Activated B cell treated with CpG ODN at 0.5 μM for 24 hours (primary cell): ENCODE measurements at regions of chr9 and their contacts with region 1.

Region 1: GRCh38 chr9:99184475-99185347 is 37.0 kb downstream of the ALG2 start:
- DNase-seq: peak; percentile 76
- ATAC-seq: peak; percentile 80
- H3K4me3 Mint-ChIP-seq: peak overlapping the region; percentile 57
- H3K27ac Mint-ChIP-seq: peak overlapping the region; percentile 95
- H3K4me1 Mint-ChIP-seq: peaks cover 98% of the 10 kb centered on the region
- H3K27me3 Mint-ChIP-seq: no peaks in the 10 kb centered on the region
- CTCF ChIP-seq: peak; percentile 81

Region 2: DNA sequence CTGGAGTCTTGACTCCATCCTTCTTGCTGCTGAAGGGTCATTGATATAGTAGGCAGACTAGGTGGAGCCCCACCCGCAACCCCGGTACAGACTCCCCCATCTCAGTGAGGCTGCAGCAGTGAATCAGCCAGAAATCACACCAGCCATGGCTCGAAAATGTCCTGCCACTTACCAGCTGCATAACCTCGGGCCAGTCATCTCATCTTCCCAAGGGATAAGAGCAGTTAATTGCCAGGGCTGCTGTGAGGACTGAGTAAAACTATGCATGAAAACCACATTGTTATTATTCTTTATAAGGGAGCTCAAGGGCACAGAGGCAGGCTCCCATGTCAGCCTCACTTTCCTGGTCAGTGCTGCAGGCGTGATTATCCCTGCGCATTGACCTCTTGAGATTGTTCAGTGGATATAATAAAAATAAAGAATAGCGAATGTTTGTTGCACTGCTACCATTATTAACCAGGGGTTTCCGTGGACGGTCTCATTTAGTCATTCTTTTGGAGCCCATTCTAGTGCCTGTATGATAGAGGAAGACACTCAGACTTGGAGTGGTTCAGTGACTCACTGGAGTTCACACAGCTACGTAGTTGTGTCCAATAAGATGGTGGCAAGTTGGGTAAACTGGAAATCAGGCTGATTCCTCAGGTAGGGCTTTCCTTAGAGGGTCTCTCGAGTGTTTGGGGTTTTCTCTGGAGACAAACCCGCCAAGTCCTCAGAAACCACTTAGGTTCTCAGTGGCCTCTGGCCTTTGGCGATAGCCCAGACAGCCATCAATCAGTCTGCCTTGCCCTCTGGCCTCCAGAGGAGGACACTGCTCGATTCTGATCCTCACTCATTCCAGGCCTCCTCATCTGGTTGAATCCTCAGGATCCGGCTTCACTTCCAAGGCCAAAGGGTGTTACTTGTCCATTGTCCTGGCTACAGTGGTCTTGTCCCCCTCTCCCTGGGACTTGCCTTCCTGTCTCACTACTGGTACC is 201.1 kb before region 1 on chr9:
- CTCF ChIA-PET with region 1: no interaction called
- POLR2A ChIA-PET with region 1: no interaction called
- intact Hi-C with region 1: no loop called
- DNase-seq: no peak
- ATAC-seq: no peak
- H3K4me3 Mint-ChIP-seq: no peak overlapping the region
- H3K27ac Mint-ChIP-seq: no peak overlapping the region
- H3K4me1 Mint-ChIP-seq: no peaks in the 10 kb centered on the region
- H3K27me3 Mint-ChIP-seq: no peaks in the 10 kb centered on the region
- CTCF ChIP-seq: no peak

Region 3: GRCh38 chr9:99104459-99105151 is 80.1 kb before region 1 on chr9 and contains the start of gene TGFBR1:
- CTCF ChIA-PET with region 1: no interaction called
- POLR2A ChIA-PET with region 1: interaction called, 11 read pairs
- intact Hi-C with region 1: loop called (anchors 2 kb)
- DNase-seq: peak; percentile 98
- ATAC-seq: peak; percentile 85
- H3K4me3 Mint-ChIP-seq: peak within 1 kb of the TSS; percentile 89
- H3K27ac Mint-ChIP-seq: peak within 1 kb of the TSS; percentile 83
- H3K4me1 Mint-ChIP-seq: peaks cover 50% of the 10 kb centered on the region
- H3K27me3 Mint-ChIP-seq: no peaks in the 10 kb centered on the region
- CTCF ChIP-seq: no peak
- total RNA-seq, gene TGFBR1: 53.5 and 65.3 TPM in 2 replicates

Region 4: GRCh38 chr9:99221621-99222415 is 37.1 kb after region 1 on chr9 and contains the starts of genes ALG2 and SEC61B:
- CTCF ChIA-PET with region 1: interaction called, 40 read pairs
- POLR2A ChIA-PET with region 1: interaction called, 191 read pairs
- intact Hi-C with region 1: loop called (anchors 1 kb)
- DNase-seq: peak; percentile 84
- ATAC-seq: peak; percentile 89
- H3K4me3 Mint-ChIP-seq: peak within 1 kb of the TSS; percentile 97
- H3K27ac Mint-ChIP-seq: peak within 1 kb of the TSS; percentile 100
- H3K4me1 Mint-ChIP-seq: peaks cover 72% of the 10 kb centered on the region
- H3K27me3 Mint-ChIP-seq: no peaks in the 10 kb centered on the region
- CTCF ChIP-seq: no peak
- total RNA-seq, gene ALG2: 51.9 and 54.4 TPM in 2 replicates
- total RNA-seq, gene SEC61B: 200 and 243 TPM in 2 replicates

Region 5: DNA sequence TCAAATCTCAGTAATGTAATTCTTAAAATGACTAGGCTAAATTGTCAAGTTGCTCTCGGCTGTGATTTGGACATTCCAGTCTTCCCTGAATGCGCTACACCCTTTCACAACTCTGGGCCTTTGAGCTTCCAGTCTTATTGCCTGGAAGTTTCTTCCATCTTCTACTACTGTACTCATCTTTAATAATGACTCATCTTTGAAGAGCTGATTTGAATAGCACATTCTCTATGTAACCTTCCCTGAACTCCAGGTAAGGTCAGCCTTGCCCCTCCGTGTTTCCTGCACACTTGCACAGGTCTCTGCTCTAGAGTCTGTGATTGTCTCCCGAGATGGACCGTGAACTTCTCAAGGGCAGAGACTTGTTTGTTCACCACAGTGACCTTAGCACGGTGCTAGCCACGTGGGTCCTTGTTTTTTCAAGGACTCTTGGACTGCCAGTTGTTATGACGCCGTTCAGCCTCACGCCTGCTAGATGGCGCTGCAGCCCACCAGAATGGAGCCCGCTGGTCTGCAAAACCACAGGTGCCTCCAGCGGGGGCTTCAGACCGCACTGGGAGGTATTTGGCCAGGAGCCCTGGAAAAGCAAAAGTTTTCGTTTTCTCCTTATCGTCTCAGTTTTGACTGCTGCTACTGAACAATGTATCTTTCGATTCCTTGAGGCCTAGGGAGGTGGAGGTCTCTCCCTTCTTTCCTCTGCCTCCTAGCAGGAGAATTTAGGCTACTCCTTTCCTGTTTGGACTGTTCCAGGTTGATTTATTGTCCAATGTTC is 81.7 kb after region 1 on chr9:
- CTCF ChIA-PET with region 1: interaction called, 12 read pairs
- POLR2A ChIA-PET with region 1: interaction called, 14 read pairs
- intact Hi-C with region 1: loop called (anchors 1 kb)
- DNase-seq: peak; percentile 71
- ATAC-seq: peak; percentile 74
- H3K4me3 Mint-ChIP-seq: peak overlapping the region; percentile 67
- H3K27ac Mint-ChIP-seq: peak overlapping the region; percentile 85
- H3K4me1 Mint-ChIP-seq: peaks cover 49% of the 10 kb centered on the region
- H3K27me3 Mint-ChIP-seq: no peaks in the 10 kb centered on the region
- CTCF ChIP-seq: no peak

Region 6: GRCh38 chr9:99660191-99660708 is 475.5 kb after region 1 on chr9:
- CTCF ChIA-PET with region 1: no interaction called
- POLR2A ChIA-PET with region 1: no interaction called
- intact Hi-C with region 1: loop called (anchors 1 kb)
- DNase-seq: peak; percentile 30
- ATAC-seq: peak; percentile 91
- H3K4me3 Mint-ChIP-seq: peak overlapping the region; percentile 21
- H3K27ac Mint-ChIP-seq: peak overlapping the region; percentile 92
- H3K4me1 Mint-ChIP-seq: peaks cover 31% of the 10 kb centered on the region
- H3K27me3 Mint-ChIP-seq: no peaks in the 10 kb centered on the region
- CTCF ChIP-seq: no peak

Region 7: DNA sequence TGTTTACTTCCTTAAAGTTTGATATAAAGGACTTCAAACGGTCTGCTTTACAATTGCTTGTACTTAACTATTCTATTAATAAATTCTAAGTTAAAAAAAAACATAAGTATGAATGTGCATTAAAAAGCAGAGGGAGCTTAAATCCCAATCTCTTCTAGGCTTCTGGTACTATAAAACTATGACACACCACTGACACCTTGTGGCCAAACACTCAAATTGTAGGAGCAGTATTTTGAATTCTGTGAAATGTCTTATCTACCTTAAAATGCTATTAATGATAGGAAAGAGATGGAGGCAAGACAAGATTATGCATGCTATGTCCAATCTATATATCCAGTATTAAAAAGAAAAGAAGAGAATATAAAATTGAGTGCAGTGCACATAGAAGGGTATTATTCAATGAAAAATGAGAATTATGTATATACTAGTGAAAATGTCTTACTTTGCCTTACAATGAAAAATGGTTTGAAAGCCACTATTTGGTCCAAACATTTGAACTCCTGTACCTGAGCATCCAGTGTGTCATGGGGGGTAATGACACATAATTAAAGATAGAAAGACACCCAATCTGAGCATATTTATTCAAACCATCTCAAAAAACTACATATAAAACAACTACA is 826.5 kb after region 1 on chr9:
- CTCF ChIA-PET with region 1: interaction called, 22 read pairs
- POLR2A ChIA-PET with region 1: no interaction called
- intact Hi-C with region 1: loop called (anchors 1 kb)
- DNase-seq: no peak
- ATAC-seq: peak; percentile 62
- H3K4me3 Mint-ChIP-seq: no peak overlapping the region
- H3K27ac Mint-ChIP-seq: no peak overlapping the region
- H3K4me1 Mint-ChIP-seq: no peaks in the 10 kb centered on the region
- H3K27me3 Mint-ChIP-seq: no peaks in the 10 kb centered on the region
- CTCF ChIP-seq: no peak

Region 8: DNA sequence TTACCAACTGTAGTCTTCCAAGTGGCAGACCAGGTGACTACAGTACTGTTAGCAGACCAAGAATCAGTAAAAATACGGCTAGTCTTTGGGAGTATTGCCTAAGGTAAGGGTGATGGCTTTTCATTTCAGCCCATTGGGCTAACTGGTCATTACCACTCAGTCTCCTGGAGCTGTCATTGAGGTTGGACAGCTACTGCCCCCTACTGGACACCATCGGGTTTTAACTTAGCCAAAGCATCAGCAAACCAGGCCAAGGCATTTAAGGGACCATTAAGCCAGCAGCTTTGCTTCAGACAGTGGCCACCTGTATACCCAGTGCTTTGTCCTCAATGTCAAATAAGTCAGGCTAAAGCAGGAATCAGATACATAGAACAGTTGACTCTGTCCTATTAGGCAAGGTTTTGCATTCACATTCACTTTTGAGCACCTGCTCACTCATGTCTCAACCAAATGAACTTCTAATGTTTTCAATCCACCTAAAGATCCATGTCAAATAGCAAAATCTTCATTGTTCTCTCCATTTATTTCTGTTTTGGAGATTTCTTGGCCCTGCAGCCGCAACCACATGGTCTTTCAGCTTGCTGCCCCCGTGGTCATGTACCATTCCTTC is 1031.6 kb after region 1 on chr9:
- CTCF ChIA-PET with region 1: interaction called, 5 read pairs
- POLR2A ChIA-PET with region 1: interaction called, 3 read pairs
- intact Hi-C with region 1: loop called (anchors 2 kb)
- DNase-seq: peak; percentile 37
- ATAC-seq: peak; percentile 87
- H3K4me3 Mint-ChIP-seq: no peak overlapping the region
- H3K27ac Mint-ChIP-seq: no peak overlapping the region
- H3K4me1 Mint-ChIP-seq: no peaks in the 10 kb centered on the region
- H3K27me3 Mint-ChIP-seq: no peaks in the 10 kb centered on the region
- CTCF ChIP-seq: no peak